ENCODE measurements at regions of chr1 and their contacts with region 1.

Region 1: DNA sequence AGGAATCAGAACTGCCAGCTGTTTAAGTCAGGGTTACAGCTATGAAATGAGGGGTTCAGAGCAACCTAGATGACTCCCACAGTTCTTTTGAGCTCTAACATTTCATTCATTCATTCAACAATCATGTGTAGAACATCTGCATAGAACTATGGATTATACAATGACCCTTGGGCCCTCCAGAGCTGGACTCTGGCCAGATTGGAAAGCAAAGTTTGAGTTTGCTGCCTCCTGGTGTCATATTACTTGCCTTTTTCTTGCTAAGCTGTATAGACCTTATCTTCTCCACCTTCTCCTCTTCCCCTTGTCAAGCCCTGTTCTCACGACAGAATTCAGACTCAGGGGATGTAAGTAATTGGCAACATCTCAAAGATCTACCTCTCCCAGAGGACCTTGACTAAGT is 4.0 kb downstream of the CASQ2 start:
- DNase-seq: peak; percentile 64
- H3K4me3 Mint-ChIP-seq: no peak overlapping the region
- H3K27ac Mint-ChIP-seq: no peak overlapping the region
- H3K4me1 Mint-ChIP-seq: peaks cover 33% of the 10 kb centered on the region
- H3K27me3 Mint-ChIP-seq: no peaks in the 10 kb centered on the region
- CTCF ChIP-seq: no peak

Region 2: DNA sequence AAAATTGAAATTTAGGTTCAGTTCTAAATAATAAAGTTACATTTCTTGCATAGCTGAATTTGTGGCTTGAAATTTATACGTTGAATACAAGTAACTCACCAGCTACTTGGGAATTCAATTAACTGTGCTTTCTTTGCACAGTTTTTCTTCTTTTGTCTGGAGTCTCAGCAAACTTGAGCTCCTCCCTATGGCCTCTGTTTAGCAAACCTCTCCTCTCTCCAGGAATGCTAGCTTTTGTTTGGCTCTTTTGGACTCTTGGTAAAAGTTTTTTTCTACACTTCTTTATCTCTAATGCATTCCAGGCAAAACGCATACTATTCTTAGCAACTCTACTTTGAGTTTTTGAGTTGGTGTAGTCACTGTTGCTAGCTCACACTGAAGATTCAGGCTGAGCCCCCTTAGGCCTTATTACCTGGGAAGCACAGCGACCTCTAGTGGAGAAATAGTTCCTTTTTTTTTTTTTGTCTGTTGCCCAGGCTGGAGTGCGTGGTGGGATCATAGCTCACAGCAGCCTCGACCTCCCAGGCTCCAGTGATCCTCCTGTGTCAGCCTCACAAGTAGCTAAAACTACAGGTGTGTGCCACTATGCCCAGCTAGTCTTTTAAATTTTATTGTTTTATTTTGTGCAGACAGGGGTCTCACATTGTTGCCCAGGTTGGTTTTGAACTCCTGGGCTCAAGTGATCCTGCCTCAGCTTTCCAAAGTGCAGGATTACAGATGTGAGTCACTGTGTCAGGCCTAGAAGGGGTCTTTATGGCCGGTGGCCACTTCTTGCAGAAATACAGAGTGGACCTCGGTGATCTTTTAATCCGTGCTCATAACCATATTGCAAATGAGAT is 57.7 kb before region 1 on chr1:
- CTCF ChIA-PET with region 1: interaction called, 10 read pairs
- intact Hi-C with region 1: no loop called
- DNase-seq: no peak
- H3K4me3 Mint-ChIP-seq: no peak overlapping the region
- H3K27ac Mint-ChIP-seq: no peak overlapping the region
- H3K4me1 Mint-ChIP-seq: peaks cover 7% of the 10 kb centered on the region
- H3K27me3 Mint-ChIP-seq: no peaks in the 10 kb centered on the region
- CTCF ChIP-seq: peak; percentile 27